Calu3 (cell line): ENCODE measurements at regions of chr2 and their contacts with region 1.

Region 1: GRCh38 chr2:207847807-207848544 is 78.3 kb upstream of the FZD5 start:
- DNase-seq: peak; percentile 74
- H3K4me3 Mint-ChIP-seq: peak overlapping the region; percentile 14
- H3K27ac Mint-ChIP-seq: peak overlapping the region; percentile 71
- H3K4me1 Mint-ChIP-seq: peaks cover 34% of the 10 kb centered on the region
- H3K27me3 Mint-ChIP-seq: no peaks in the 10 kb centered on the region
- CTCF ChIP-seq: no peak

Region 2: GRCh38 chr2:207796585-207797350 is 51.2 kb before region 1 on chr2:
- CTCF ChIA-PET with region 1: interaction called, 8 read pairs
- intact Hi-C with region 1: loop called (anchors 5 kb)
- DNase-seq: peak; percentile 43
- H3K4me3 Mint-ChIP-seq: no peak overlapping the region
- H3K27ac Mint-ChIP-seq: peak overlapping the region; percentile 69
- H3K4me1 Mint-ChIP-seq: peaks cover 18% of the 10 kb centered on the region
- H3K27me3 Mint-ChIP-seq: no peaks in the 10 kb centered on the region
- CTCF ChIP-seq: no peak

Region 3: DNA sequence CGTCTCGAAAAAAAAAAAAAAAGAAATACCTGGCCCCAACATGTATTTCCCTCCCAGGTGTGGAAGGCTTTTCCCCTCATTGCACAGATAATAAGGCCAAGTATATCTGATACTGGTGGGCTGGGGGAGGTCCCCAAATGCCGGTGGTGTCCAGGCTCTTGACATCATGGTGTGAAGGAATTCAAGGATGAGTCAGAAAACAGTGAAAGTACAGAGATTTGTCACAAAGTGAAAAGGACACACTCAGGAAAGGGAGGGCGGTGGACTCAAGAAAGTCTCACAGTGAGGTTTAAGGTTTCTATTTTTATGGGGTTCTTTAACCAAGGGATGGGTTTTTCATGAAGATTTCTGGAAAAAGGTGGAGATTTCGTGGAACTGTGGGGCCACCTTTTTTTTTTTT is 40.5 kb before region 1 on chr2:
- CTCF ChIA-PET with region 1: interaction called, 5 read pairs
- intact Hi-C with region 1: loop called (anchors 1 kb)
- DNase-seq: no peak
- H3K4me3 Mint-ChIP-seq: no peak overlapping the region
- H3K27ac Mint-ChIP-seq: no peak overlapping the region
- H3K4me1 Mint-ChIP-seq: peaks cover 41% of the 10 kb centered on the region
- H3K27me3 Mint-ChIP-seq: no peaks in the 10 kb centered on the region
- CTCF ChIP-seq: no peak

Region 4: DNA sequence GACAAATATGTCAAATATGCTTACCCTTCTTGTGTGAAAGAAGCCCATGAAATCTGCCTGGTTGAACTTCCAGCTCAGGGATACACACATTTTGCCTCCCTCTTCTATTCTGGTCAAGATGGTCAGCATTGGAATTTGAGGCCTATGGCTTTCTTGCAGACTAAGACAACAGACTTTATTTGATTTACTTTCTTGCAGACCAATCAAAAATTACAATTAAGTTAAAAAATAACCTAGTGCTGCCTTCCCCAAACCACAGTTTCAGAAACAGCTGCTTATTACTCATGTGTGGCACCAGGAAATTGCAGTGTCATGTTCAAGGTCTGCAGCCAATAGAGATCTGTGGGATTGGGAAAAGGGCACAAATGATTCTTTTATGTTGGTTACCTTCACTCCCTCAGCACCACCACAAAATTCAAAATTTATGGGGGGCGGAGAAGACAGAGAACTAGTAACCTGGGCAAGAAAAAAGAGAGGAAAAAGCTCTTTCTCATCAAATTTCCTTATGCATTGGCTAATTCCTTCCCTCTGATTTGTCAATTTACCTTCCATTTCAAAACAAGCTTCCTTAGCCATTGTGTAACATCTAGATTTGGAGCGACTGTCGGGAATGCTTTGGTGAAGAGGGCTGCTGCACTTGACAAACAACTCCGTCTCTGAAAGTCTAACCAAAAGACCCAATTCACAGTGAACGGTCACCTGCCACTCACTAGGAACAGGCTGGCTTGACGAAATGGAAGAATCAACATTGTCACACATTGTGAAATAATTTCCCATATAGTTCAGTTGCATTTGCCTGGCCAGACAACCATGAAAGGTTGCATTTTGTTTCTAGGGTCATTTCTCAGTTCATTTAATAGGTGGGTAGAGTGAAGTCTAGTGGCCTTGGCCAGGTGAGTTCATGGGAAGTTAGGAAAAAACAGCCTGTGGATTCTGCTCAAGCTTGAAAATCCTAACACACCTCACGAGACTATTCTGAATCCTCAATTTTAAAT is 22.1 kb after region 1 on chr2:
- CTCF ChIA-PET with region 1: interaction called, 7 read pairs
- intact Hi-C with region 1: loop called (anchors 2 kb)
- DNase-seq: peak; percentile 35
- H3K4me3 Mint-ChIP-seq: peak overlapping the region; percentile 9
- H3K27ac Mint-ChIP-seq: peak overlapping the region; percentile 83
- H3K4me1 Mint-ChIP-seq: peaks cover 42% of the 10 kb centered on the region
- H3K27me3 Mint-ChIP-seq: no peaks in the 10 kb centered on the region
- CTCF ChIP-seq: no peak

Region 5: GRCh38 chr2:207974216-207974605 is 126.2 kb after region 1 on chr2:
- CTCF ChIA-PET with region 1: no interaction called
- intact Hi-C with region 1: loop called (anchors 5 kb)
- DNase-seq: peak; percentile 4
- H3K4me3 Mint-ChIP-seq: no peak overlapping the region
- H3K27ac Mint-ChIP-seq: no peak overlapping the region
- H3K4me1 Mint-ChIP-seq: peaks cover 30% of the 10 kb centered on the region
- H3K27me3 Mint-ChIP-seq: no peaks in the 10 kb centered on the region
- CTCF ChIP-seq: no peak

Region 6: DNA sequence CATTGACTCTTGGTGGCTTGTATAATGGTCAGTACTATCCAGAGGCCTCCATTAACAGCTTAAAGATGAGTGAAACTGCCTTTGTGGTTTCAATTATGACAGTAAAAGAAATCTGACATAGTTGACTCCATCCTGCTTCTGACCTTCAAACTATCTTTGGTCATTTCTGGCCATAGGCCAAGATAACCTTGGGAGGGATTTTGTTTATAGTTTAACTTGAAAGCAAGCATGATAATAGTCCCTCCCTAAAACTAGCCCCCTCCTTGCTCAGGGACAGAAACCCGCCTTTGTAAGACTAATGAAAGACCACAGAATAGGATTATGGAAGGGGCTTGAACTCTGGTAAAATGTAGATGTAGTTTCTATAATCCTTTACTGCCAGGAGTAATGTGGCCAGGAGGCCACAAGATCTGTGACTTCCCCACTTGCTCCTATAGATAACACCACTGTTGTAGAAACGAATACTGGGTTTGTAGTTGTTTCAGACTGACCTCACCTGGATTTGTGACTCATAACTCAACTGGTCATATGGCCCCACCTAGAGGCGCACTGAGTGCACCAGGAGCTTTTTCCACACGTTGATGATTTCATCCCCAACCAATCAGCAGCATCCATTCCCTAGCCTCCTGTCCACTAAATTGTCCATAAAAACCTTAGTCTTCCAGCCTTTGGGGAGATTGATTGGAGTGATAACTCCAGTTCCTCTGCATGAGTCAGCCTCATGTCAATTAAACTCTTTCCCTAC is 186.0 kb after region 1 on chr2:
- CTCF ChIA-PET with region 1: no interaction called
- intact Hi-C with region 1: no loop called
- DNase-seq: peak; percentile 78
- H3K4me3 Mint-ChIP-seq: no peak overlapping the region
- H3K27ac Mint-ChIP-seq: peak overlapping the region; percentile 55
- H3K4me1 Mint-ChIP-seq: peaks cover 14% of the 10 kb centered on the region
- H3K27me3 Mint-ChIP-seq: no peaks in the 10 kb centered on the region
- CTCF ChIP-seq: peak; percentile 43